ENCODE measurements at regions of chrX and their contacts with region 1.

Region 1: GRCh38 chrX:13658602-13659001 is 5.7 kb downstream of the TCEANC start:
- DNase-seq: peak; percentile 52
- H3K4me3 ChIP-seq: no peak overlapping the region
- H3K27ac ChIP-seq: no peak overlapping the region
- H3K4me1 ChIP-seq: peaks cover 3% of the 10 kb centered on the region
- H3K27me3 ChIP-seq: no peaks in the 10 kb centered on the region
- CTCF ChIP-seq: peak; percentile 19 to 24
- POLR2A ChIP-seq: no peak

Region 2: GRCh38 chrX:13750204-13750603 is 91.6 kb after region 1 on chrX:
- CTCF ChIA-PET with region 1: interaction called, 5 read pairs
- POLR2A ChIA-PET with region 1: no interaction called
- dilution Hi-C with region 1: no loop called
- intact Hi-C with region 1: loop called (anchors 1 kb)
- DNase-seq: peak; percentile 35
- H3K4me3 ChIP-seq: no peak overlapping the region
- H3K27ac ChIP-seq: no peak overlapping the region
- H3K4me1 ChIP-seq: no peaks in the 10 kb centered on the region
- H3K27me3 ChIP-seq: no peaks in the 10 kb centered on the region
- CTCF ChIP-seq: peak; percentile 22 to 31
- POLR2A ChIP-seq: no peak